PC-9 (cell line): ENCODE measurements at regions of chr10 and their contacts with region 1.

Region 1: DNA sequence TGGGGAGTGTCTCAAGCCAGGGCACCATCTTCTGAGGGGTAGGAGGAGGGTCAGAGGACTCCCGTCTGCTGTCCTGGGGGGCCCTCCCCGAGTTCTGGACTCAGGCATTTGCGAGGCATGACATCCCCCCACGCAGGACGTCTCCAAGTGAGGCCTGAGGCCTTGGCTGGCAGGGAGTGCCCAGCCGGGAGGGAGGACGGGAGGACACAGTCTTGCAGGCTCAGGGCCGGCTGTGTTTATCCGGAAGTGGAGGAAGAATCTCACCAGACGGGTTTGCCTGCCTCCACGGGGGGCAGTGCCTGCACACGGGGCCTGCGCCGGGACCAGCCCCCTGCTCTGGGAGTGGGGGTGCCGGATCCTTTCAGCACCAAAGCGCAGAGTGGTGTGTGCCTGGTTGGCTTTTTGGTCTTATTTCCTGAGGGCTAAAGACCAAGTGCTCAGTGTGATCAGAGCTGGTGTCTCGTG is 10.8 kb downstream of the PWWP2B start:
- DNase-seq: peak; percentile 89 to 90
- H3K4me3 ChIP-seq: peak overlapping the region; percentile 56
- H3K27ac ChIP-seq: peak overlapping the region; percentile 94
- H3K4me1 ChIP-seq: peaks cover 50% of the 10 kb centered on the region
- H3K27me3 ChIP-seq: no peaks in the 10 kb centered on the region
- CTCF ChIP-seq: no peak

Region 2: DNA sequence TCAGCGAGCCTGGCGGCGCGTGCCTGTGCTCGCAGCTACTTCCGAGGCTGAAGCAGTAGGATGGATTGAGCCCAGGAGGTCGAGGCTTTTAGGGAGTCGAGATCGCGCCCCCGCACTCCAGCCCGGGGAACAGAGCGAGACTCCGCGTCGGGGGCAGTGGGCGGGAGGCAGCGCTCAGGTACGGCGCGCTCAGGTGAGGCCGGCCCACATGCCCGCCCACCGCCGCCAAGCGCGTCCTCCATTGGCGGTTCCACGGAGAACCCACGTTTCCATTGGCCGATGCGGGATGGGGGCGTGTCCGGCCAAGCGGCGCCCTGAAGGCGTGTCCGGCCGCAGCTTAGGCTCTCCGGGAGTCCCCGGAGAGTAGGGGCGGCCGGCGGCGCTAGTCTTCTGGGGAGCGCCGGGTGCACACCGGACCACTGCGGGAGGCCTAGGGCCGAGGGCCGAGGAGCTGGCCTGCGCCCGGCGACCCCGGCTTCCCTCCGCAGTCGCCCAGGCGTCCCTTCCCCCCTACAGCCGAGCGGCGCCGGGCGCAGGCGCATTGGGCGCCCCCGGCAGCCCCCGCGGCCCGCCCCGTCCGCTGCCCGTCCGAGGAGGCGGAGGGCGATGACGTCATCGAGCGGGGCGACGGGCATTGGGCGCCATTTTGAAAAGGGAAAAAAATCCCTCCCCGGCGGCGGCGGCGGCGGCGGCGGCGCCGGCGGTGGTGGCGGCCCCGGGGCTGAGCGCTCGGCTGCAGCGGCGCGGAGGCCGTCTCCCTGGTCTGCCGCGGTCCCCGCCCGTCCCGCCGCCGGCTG is 507.3 kb before region 1 on chr10 and contains the start of gene PPP2R2D:
- CTCF ChIA-PET with region 1: no interaction called
- POLR2A ChIA-PET with region 1: no interaction called
- intact Hi-C with region 1: loop called (anchors 5 kb)
- DNase-seq: peak; percentile 83 to 92
- H3K4me3 ChIP-seq: peak within 1 kb of the TSS; percentile 79
- H3K27ac ChIP-seq: no peak within 1 kb of the TSS
- H3K4me1 ChIP-seq: peaks cover 29% of the 10 kb centered on the region
- H3K27me3 ChIP-seq: no peaks in the 10 kb centered on the region; the same call in 1 of the 2 replicates
- CTCF ChIP-seq: no peak
- total RNA-seq, gene PPP2R2D: 23.5 TPM in 2 replicates

Region 3: GRCh38 chr10:132331526-132332432 is 76.1 kb before region 1 on chr10 and contains the start of gene LRRC27:
- CTCF ChIA-PET with region 1: no interaction called
- POLR2A ChIA-PET with region 1: no interaction called
- intact Hi-C with region 1: loop called (anchors 5 kb)
- DNase-seq: peak; percentile 85 to 98
- H3K4me3 ChIP-seq: peak within 1 kb of the TSS; percentile 88
- H3K27ac ChIP-seq: peak within 1 kb of the TSS; percentile 57
- H3K4me1 ChIP-seq: peaks cover 8% of the 10 kb centered on the region; the same call in 1 of the 2 replicates
- H3K27me3 ChIP-seq: no peaks in the 10 kb centered on the region
- CTCF ChIP-seq: no peak
- total RNA-seq, gene LRRC27: 10.0 and 17.5 TPM in 2 replicates

Region 4: DNA sequence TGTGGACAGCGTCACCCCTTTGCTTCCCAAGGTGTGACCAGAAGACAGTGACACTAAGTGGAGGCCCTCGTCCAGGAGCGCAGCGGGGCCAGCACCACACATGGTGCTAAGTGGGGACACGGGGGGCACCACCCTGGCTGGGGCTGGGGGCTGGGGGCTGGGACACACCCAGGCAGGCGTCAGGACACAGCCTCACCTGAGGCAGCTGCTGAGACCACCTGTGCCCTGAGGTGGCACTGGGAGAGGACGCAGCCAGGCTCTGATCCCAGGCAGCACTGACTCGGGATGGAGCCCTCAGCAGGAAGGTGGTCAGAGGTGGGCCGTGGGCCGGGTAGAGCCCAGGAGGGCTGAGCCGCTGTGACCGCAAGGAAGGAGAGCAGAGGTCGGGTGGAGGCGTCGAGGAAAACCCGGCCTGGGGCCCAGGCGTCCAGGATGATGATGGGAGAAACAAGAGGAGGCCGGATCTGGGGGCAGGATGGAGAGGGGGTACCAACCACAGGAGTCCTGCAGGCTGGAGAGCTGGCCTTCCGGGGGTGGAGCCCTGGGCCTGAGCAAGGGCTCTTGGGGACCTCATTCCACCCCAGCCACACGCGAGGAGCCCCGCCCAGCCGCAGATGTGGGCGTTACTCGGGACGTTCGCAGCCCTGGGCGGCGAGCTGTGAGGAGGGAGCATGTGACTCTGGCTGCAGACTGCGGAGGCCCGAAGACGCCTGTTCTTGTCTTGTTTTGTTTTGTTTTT is 53.3 kb before region 1 on chr10:
- CTCF ChIA-PET with region 1: no interaction called
- POLR2A ChIA-PET with region 1: no interaction called
- intact Hi-C with region 1: no loop called
- DNase-seq: no peak
- H3K4me3 ChIP-seq: no peak overlapping the region
- H3K27ac ChIP-seq: no peak overlapping the region
- H3K4me1 ChIP-seq: no peaks in the 10 kb centered on the region
- H3K27me3 ChIP-seq: no peaks in the 10 kb centered on the region
- CTCF ChIP-seq: no peak

Region 5: DNA sequence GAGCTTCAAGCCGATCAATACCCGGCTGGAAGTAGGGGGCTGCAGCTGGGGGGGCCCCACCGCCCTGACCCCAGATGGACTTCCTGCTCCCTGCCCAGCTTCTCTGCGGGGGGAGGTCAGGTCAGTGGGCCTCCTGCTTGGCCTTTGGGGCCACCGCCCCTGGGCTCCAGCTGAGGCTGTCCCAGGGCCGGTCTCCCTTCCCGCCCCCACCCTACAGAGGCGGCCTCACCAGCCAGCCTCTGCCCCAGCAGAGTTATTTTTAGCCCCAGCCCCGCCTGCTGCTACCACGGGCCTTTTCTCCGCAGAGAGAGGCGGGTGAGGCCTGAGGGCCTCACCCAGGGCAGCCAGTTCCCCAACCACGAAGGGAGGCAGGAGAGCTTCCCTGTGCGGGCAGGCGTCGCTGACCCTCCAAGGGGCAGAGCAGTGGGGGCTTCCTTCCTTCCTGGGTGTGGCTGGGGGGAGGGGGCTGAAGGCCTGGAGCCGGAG is 13.6 kb after region 1 on chr10:
- CTCF ChIA-PET with region 1: no interaction called
- POLR2A ChIA-PET with region 1: interaction called, 5 read pairs
- intact Hi-C with region 1: loop called (anchors 1 kb)
- DNase-seq: peak; percentile 63 to 74
- H3K4me3 ChIP-seq: peak overlapping the region; percentile 35; the same call in 1 of the 2 replicates
- H3K27ac ChIP-seq: peak overlapping the region; percentile 88
- H3K4me1 ChIP-seq: peaks cover 51% of the 10 kb centered on the region
- H3K27me3 ChIP-seq: no peaks in the 10 kb centered on the region
- CTCF ChIP-seq: no peak

Region 6: GRCh38 chr10:132446661-132447194 is 38.9 kb after region 1 on chr10:
- CTCF ChIA-PET with region 1: interaction called, 5 read pairs
- POLR2A ChIA-PET with region 1: interaction called, 6 read pairs
- intact Hi-C with region 1: loop called (anchors 1 kb)
- DNase-seq: peak; percentile 72 to 77
- H3K4me3 ChIP-seq: peak overlapping the region; percentile 64
- H3K27ac ChIP-seq: peak overlapping the region; percentile 99
- H3K4me1 ChIP-seq: peaks cover 48% of the 10 kb centered on the region
- H3K27me3 ChIP-seq: no peaks in the 10 kb centered on the region
- CTCF ChIP-seq: peak; percentile 74

Region 7: DNA sequence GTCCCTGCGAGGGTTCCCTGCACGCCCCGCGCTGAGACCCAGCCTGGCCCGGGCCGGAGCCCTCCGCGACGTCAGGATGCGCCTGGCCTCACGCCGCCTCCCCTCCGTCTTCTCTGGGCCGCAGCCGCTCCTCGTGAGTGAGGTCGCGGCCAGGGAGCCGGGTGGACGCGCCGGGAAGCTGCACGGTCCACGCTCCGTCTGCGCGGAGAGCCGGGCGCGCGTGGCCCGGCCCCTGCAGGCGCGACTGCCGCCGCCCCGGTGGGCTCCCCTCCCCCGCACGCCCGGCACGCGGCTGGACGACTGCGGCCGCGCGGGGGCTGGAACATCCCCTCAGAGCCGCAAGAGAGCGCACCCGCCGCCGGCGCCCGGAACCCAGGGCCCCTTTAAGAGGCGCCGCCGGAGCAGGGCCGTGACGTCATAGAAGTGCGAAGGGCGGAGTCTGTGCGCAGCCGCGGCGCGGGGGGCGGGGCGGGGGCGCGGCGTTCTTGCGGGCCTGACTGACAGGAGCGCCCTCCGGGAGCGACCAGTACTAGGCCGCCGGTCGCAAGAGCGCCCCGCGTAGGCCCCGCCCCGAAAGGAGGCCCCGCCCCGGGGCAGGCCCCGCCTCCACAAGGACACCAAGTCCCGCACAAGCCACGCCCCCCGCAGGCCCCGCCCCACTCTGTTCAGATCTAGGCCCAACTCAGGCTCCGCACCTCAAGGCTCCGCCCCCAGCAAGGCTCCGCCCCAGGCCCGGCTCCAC is 129.3 kb after region 1 on chr10:
- CTCF ChIA-PET with region 1: no interaction called
- POLR2A ChIA-PET with region 1: no interaction called
- intact Hi-C with region 1: loop called (anchors 5 kb)
- DNase-seq: peak; percentile 91 to 99
- H3K4me3 ChIP-seq: peak overlapping the region; percentile 72
- H3K27ac ChIP-seq: no peak overlapping the region
- H3K4me1 ChIP-seq: peaks cover 39% of the 10 kb centered on the region
- H3K27me3 ChIP-seq: no peaks in the 10 kb centered on the region
- CTCF ChIP-seq: no peak